ENCODE measurements at regions of chr5 and their contacts with region 1.

Region 1: DNA sequence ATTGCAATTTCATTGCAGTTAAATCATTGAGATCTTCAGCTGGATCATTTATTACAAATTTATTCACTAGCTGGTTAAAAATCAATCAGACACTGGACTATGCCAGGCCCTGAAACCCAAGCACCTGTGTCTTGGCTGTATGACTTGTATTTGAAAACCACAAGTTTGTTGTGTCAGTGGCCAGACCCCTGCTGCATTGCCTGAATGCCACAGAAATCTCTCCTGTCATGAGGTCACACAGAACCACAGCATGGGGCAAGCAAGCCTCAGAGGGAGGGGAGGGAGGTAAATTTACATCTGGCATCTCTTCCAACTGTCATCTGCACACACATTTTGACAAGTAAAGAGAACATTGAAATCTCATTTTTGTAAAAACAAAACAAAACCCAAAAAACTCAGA is 90.0 kb downstream of the ARRDC3 start:
- DNase-seq: no peak

Region 2: GRCh38 chr5:91059409-91059808 is 233.7 kb before region 1 on chr5:
- intact Hi-C with region 1: no loop called
- DNase-seq: no peak

Region 3: DNA sequence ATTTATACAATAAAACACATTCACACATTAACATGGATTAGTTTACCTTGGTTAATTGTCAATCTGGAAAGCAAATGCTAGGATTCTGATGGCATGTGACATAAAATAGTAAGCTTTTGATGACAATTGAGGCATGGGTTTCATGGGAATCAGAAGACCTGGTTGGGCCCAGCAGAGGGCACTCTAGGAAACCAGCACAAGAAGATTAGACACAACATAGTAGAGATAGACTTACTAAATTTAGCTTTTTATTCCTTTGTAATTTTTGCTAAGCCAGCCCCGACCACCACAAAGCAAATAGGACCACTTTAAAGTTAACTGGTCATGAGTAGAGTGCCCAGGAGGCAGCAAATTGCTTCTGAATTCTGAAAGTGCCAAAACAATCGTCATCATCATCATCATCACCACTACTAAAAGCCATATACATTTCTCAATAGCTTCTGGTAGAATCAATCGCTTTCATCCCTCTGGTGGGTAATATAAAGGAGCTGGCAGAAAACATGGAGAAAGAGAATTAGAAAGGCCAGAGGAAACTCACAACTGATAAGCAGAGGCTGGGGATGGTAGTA is 73.2 kb before region 1 on chr5:
- intact Hi-C with region 1: no loop called
- DNase-seq: no peak

Region 4: DNA sequence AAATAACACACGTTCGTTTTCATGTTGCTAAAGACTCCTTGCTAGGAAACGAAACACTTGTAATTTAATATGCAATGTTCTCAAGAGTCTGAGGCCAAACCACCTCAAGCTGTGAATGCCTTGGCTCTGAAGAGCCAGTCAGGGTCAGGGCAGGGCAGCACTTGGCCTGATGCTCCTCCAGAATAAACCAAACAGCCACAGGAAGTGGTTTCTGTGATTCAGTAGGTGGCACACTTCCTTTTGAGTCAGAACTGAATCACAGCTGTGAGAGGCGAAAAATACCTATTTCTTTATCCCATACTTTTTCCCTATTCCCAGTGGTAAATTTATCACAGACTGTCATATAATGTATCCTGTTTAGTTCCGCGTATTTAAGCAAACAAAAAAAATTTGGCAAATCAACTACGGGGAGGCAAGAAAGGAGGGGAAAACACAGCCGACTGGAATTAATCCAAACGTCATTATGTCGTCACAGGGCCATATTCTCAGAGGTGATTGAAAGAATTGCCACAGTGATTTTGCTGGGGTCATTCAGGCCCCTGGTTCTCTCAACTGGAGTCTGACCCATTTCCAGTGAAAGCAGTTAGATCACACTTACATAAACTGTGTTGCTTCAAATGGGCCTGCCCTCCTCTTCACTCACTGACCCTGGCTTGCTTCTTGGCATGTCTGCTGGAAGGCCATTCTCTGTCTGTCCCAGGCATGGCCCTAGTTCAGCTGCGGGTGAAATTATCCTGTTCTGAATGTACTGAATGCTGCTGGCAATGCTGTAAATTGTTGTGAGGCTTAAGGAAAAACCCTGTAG is 18.8 kb after region 1 on chr5:
- intact Hi-C with region 1: loop called in 1 of 2 experiments (anchors 1 kb)
- DNase-seq: peak; percentile 94